Activated CD4-positive, alpha-beta memory T cell treated with anti-CD3 and anti-CD28 coated beads for 36 hours (primary cell): ENCODE measurements at regions of chr4 and their contacts with region 1.

Region 1: DNA sequence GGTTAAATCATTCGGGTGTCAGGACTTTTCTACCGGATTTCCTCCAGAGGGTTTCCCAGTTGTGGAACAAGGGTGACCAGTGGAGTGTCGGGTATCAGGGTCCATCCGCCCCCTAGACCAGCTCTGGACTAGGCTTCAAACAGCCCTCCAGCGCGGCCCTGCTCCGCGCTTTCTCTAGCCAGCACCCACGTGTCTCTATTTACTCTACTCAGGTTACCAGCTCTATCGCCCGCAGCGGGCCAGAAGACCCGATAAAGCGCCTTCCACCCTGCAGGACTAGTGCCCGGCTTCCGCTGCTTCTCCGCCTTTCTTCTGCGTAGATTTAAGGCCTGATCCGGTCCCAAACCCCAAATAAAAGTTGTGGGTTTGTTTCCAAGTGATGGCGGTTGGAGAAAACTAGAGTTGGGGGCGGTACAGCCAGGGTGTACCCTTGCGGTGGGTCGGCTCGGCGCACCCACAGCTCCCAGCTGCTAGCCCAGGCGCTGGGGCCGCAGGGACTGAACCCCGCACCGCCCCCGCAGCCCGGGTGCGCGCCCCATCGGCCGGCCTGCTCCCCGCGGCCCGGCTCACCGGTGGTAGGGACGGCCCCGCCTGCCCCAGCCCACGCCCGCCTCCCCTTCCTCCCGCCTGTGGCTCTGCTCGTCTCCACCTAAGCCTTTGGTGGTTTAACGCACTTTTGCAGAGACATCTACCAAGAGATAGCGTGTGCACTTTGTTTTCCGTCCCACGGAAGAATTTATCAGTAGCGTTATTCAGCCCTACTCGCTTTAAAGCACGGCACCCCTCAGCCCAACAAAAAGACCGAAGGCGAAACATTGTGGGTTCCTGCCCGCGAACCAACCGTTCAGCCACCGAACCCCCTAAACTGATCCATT is 2.1 kb downstream of the LEF1 start:
- DNase-seq: peak; percentile 81
- H3K4me3 Mint-ChIP-seq: peak overlapping the region; percentile 85
- H3K27ac Mint-ChIP-seq: peak overlapping the region; percentile 94
- H3K4me1 Mint-ChIP-seq: peaks cover 46% of the 10 kb centered on the region
- H3K27me3 Mint-ChIP-seq: peaks cover 9% of the 10 kb centered on the region

Region 2: GRCh38 chr4:108045694-108046038 is 121.0 kb before region 1 on chr4:
- CTCF ChIA-PET with region 1: no interaction called
- POLR2A ChIA-PET with region 1: interaction called, 3 read pairs
- intact Hi-C with region 1: loop called (anchors 1 kb)
- DNase-seq: peak; percentile 51
- H3K4me3 Mint-ChIP-seq: no peak overlapping the region
- H3K27ac Mint-ChIP-seq: peak overlapping the region; percentile 77
- H3K4me1 Mint-ChIP-seq: peaks cover 52% of the 10 kb centered on the region
- H3K27me3 Mint-ChIP-seq: no peaks in the 10 kb centered on the region

Region 3: DNA sequence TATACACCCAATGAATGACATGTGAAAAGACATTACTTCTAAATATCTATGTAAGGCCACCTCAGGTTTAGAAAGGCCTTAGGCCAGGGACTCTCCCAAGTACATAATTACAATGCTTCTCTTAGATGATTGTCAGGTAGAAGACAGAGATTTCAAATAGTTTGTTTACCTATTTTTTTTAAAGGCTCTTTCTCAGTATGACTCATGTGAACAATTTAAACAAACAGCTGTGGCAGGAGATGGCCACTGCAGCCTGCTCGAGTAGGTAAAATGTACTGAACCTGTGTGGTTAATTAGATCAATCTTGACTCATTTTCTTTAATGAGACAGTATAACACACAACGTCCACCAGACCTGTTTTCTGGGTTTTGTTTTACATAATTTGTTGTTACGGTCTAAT is 48.2 kb before region 1 on chr4:
- CTCF ChIA-PET with region 1: no interaction called
- POLR2A ChIA-PET with region 1: interaction called, 4 read pairs
- intact Hi-C with region 1: loop called (anchors 1 kb)
- DNase-seq: peak; percentile 47
- H3K4me3 Mint-ChIP-seq: peak overlapping the region; percentile 20
- H3K27ac Mint-ChIP-seq: peak overlapping the region; percentile 85
- H3K4me1 Mint-ChIP-seq: peaks cover 88% of the 10 kb centered on the region
- H3K27me3 Mint-ChIP-seq: no peaks in the 10 kb centered on the region

Region 4: GRCh38 chr4:108141213-108141950 is 25.3 kb before region 1 on chr4:
- CTCF ChIA-PET with region 1: interaction called, 4 read pairs
- POLR2A ChIA-PET with region 1: interaction called, 3 read pairs
- intact Hi-C with region 1: loop called (anchors 1 kb)
- DNase-seq: peak; percentile 67
- H3K4me3 Mint-ChIP-seq: peak overlapping the region; percentile 64
- H3K27ac Mint-ChIP-seq: peak overlapping the region; percentile 88
- H3K4me1 Mint-ChIP-seq: peaks cover 90% of the 10 kb centered on the region
- H3K27me3 Mint-ChIP-seq: no peaks in the 10 kb centered on the region

Region 5: GRCh38 chr4:108156391-108156790 is 10.3 kb before region 1 on chr4:
- CTCF ChIA-PET with region 1: interaction called, 7 read pairs
- POLR2A ChIA-PET with region 1: interaction called, 4 read pairs
- intact Hi-C with region 1: loop called (anchors 1 kb)
- DNase-seq: no peak
- H3K4me3 Mint-ChIP-seq: no peak overlapping the region
- H3K27ac Mint-ChIP-seq: peak overlapping the region; percentile 80
- H3K4me1 Mint-ChIP-seq: peaks cover 84% of the 10 kb centered on the region
- H3K27me3 Mint-ChIP-seq: no peaks in the 10 kb centered on the region